ENCODE measurements at regions of chr7 and their contacts with region 1.

Region 1: GRCh38 chr7:100726996-100727761 is 6.2 kb upstream of the ZAN start:
- DNase-seq: no peak
- H3K4me3 ChIP-seq: no peak overlapping the region
- H3K4me3 Mint-ChIP-seq: no peak overlapping the region
- H3K27ac ChIP-seq: no peak overlapping the region
- H3K27ac Mint-ChIP-seq: no peak overlapping the region
- H3K4me1 ChIP-seq: peaks cover 5% of the 10 kb centered on the region
- H3K4me1 Mint-ChIP-seq: peaks cover 0 to 4% (median 3%) of the 10 kb centered on the region in 4 donors
- H3K27me3 ChIP-seq: no peaks in the 10 kb centered on the region
- H3K27me3 Mint-ChIP-seq: peaks cover 12 to 22% of the 10 kb centered on the region in 2 donors

Region 2: GRCh38 chr7:100604028-100604975 is 122.9 kb before region 1 on chr7:
- CTCF ChIA-PET with region 1: interaction called, 3 read pairs
- POLR2A ChIA-PET with region 1: no interaction called
- intact Hi-C with region 1: loop called (anchors 1 kb)
- DNase-seq: peak; percentile 63 to 83 (median 68)
- H3K4me3 ChIP-seq: peak overlapping the region; percentile 34 to 58
- H3K4me3 Mint-ChIP-seq: peak overlapping the region; percentile 78 to 93 (median 87)
- H3K27ac ChIP-seq: peak overlapping the region; percentile 64
- H3K27ac Mint-ChIP-seq: peak overlapping the region; percentile 71 to 95 (median 91)
- H3K4me1 ChIP-seq: peaks cover 21% of the 10 kb centered on the region
- H3K4me1 Mint-ChIP-seq: peaks cover 9 to 35% (median 16%) of the 10 kb centered on the region in 4 donors
- H3K27me3 ChIP-seq: no peaks in the 10 kb centered on the region
- H3K27me3 Mint-ChIP-seq: no peaks in the 10 kb centered on the region

Region 3: GRCh38 chr7:100745184-100745583 is 18.0 kb after region 1 on chr7:
- CTCF ChIA-PET with region 1: no interaction called
- POLR2A ChIA-PET with region 1: no interaction called
- intact Hi-C with region 1: loop called (anchors 2 kb)
- DNase-seq: peak in 1 of 5 donors; percentile 9
- H3K4me3 ChIP-seq: no peak overlapping the region
- H3K4me3 Mint-ChIP-seq: peak overlapping the region in 4 of 8 donors; percentile 55 to 79 (median 70)
- H3K27ac ChIP-seq: no peak overlapping the region
- H3K27ac Mint-ChIP-seq: peak overlapping the region in 1 of 7 donors; percentile 52
- H3K4me1 ChIP-seq: no peaks in the 10 kb centered on the region
- H3K4me1 Mint-ChIP-seq: peaks cover 2 to 5% (median 3%) of the 10 kb centered on the region in 4 donors
- H3K27me3 ChIP-seq: no peaks in the 10 kb centered on the region
- H3K27me3 Mint-ChIP-seq: peaks cover 17 to 22% of the 10 kb centered on the region in 2 donors

Region 4: DNA sequence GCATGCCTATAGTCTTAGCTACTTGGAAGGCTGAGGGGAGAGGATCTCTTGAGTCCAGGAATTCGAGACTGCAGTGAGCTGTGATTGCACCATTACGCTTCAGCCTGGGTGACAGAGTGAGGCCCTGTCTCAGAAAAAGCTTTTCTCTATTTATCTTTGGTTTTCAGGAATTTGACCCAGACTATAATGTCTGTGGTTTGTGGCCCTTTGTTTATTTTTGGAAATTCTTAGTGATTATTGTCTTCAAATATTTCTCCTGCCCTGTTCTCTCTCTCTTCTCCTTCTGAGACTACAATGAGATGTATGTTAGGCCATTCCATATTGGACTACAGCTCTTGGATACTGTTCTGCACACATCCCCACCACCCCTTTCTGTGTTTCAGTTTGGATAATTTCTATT is 246.8 kb after region 1 on chr7:
- CTCF ChIA-PET with region 1: no interaction called
- POLR2A ChIA-PET with region 1: no interaction called
- intact Hi-C with region 1: no loop called
- DNase-seq: no peak
- H3K4me3 ChIP-seq: no peak overlapping the region
- H3K4me3 Mint-ChIP-seq: no peak overlapping the region
- H3K27ac ChIP-seq: no peak overlapping the region
- H3K27ac Mint-ChIP-seq: no peak overlapping the region
- H3K4me1 ChIP-seq: no peaks in the 10 kb centered on the region
- H3K4me1 Mint-ChIP-seq: peaks cover 0 to 5% (median 0%) of the 10 kb centered on the region in 4 donors
- H3K27me3 ChIP-seq: no peaks in the 10 kb centered on the region
- H3K27me3 Mint-ChIP-seq: peaks cover 2 to 16% of the 10 kb centered on the region in 2 donors

Measured in CD4-positive, alpha-beta memory T cell (primary cell).